Activated CD4-positive, alpha-beta T cell treated with anti-CD3 and anti-CD28 coated beads for 36 hours (primary cell): ENCODE measurements at regions of chr6 and their contacts with region 1.

Region 1: GRCh38 chr6:43174263-43175112 is 3.4 kb downstream of the SRF start:
- DNase-seq: peak; percentile 98
- ATAC-seq: peak; percentile 80
- H3K4me3 Mint-ChIP-seq: peak overlapping the region; percentile 85
- H3K27ac Mint-ChIP-seq: peak overlapping the region; percentile 79
- H3K4me1 Mint-ChIP-seq: peaks cover 38% of the 10 kb centered on the region
- H3K27me3 Mint-ChIP-seq: no peaks in the 10 kb centered on the region

Region 2: DNA sequence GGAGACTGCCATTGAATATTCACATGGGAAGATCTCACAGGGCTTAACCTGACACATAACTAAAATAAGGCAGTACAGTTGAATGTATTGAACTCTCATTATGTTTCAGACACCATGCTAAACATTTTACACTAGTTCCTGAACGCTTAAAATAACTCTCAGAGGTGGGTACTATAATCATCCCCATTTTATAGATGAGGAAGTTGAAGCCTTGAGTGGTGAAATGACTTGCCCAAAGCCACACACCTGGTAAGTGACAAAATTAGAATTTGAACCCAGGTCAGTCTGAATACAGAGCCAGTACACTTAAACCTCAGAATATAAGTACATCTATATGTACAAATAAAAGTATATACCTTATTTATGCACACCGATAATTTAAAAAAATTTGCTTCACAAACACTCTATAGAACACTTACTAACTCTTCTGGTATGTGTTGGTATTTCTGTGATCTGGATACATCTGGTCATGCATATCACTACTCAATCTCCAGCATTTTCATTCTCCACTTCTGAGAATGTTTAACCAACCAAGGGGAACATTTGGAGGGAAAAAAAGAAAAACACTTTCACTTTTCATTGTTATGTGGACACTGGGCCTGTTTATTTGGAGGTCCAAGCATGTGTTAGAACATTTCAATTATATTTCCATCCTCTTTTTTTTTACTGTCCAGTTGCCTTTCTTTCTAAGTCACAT is 397.2 kb before region 1 on chr6:
- CTCF ChIA-PET with region 1: no interaction called
- POLR2A ChIA-PET with region 1: no interaction called
- intact Hi-C with region 1: loop called (anchors 2 to 10 kb)
- DNase-seq: no peak
- ATAC-seq: no peak
- H3K4me3 Mint-ChIP-seq: no peak overlapping the region
- H3K27ac Mint-ChIP-seq: peak overlapping the region; percentile 79
- H3K4me1 Mint-ChIP-seq: peaks cover 67% of the 10 kb centered on the region
- H3K27me3 Mint-ChIP-seq: no peaks in the 10 kb centered on the region

Region 3: DNA sequence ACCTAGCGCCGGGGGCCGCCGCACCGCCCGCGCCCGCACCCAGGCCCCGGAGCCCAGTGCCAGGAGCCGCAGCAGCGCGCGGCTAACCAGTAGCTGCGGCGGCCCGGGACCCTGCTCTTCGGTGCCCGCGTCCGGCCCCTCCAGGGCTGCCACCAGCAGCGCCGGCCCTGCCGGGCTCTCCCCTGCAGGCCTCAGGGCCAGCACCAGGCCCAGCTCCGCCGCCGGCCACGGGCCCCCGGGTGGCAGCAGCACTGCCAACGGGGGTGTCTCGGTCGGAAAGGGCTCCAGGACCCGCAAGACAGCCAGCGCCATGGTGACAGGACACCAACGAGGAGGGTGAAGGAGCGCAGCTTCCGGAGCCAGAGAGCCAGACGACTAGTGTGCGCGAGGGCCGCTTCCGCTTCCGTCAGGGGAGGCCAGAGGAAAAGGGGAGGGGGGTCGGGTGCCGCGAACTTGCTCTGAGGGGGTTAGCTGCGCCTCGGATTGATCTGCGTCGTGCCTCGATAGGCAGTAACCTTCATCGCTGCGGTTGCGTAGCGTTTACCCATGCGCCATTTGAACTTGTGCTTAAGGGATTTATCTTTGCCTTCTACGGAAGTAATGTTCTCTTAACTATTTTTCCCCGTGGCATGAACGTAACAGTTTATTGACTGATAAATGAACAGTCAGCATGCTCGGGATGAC is 195.5 kb before region 1 on chr6 and contains the start of gene PEX6:
- CTCF ChIA-PET with region 1: interaction called, 3 read pairs
- POLR2A ChIA-PET with region 1: no interaction called
- intact Hi-C with region 1: loop called in 1 of 2 experiments (anchors 1 kb)
- DNase-seq: peak; percentile 98
- ATAC-seq: peak; percentile 95
- H3K4me3 Mint-ChIP-seq: peak within 1 kb of the TSS; percentile 89
- H3K27ac Mint-ChIP-seq: peak within 1 kb of the TSS; percentile 95
- H3K4me1 Mint-ChIP-seq: peaks cover 45% of the 10 kb centered on the region
- H3K27me3 Mint-ChIP-seq: no peaks in the 10 kb centered on the region
- total RNA-seq, gene PEX6: 10.7 to 14.6 TPM

Region 4: GRCh38 chr6:43059168-43060033 is 115.1 kb before region 1 on chr6 and contains the starts of genes KLC4 and MRPL2:
- CTCF ChIA-PET with region 1: no interaction called
- POLR2A ChIA-PET with region 1: interaction called, 3 read pairs
- intact Hi-C with region 1: loop called (anchors 1 kb)
- DNase-seq: peak; percentile 99
- ATAC-seq: peak; percentile 98
- H3K4me3 Mint-ChIP-seq: peak within 1 kb of the TSS; percentile 85
- H3K27ac Mint-ChIP-seq: peak within 1 kb of the TSS; percentile 94
- H3K4me1 Mint-ChIP-seq: peaks cover 27% of the 10 kb centered on the region
- H3K27me3 Mint-ChIP-seq: no peaks in the 10 kb centered on the region
- total RNA-seq, gene KLC4: 10.0 to 10.1 TPM
- total RNA-seq, gene MRPL2: 93.9 to 110 TPM

Region 5: GRCh38 chr6:43150051-43150751 is 24.3 kb before region 1 on chr6:
- CTCF ChIA-PET with region 1: no interaction called
- POLR2A ChIA-PET with region 1: no interaction called
- intact Hi-C with region 1: no loop called
- DNase-seq: no peak
- ATAC-seq: no peak
- H3K4me3 Mint-ChIP-seq: no peak overlapping the region
- H3K27ac Mint-ChIP-seq: no peak overlapping the region
- H3K4me1 Mint-ChIP-seq: no peaks in the 10 kb centered on the region
- H3K27me3 Mint-ChIP-seq: no peaks in the 10 kb centered on the region

Region 6: GRCh38 chr6:43369174-43370022 is 194.9 kb after region 1 on chr6 and contains the start of gene ZNF318:
- CTCF ChIA-PET with region 1: no interaction called
- POLR2A ChIA-PET with region 1: no interaction called
- intact Hi-C with region 1: loop called in 1 of 2 experiments (anchors 1 kb)
- DNase-seq: peak; percentile 97
- ATAC-seq: peak; percentile 97
- H3K4me3 Mint-ChIP-seq: peak within 1 kb of the TSS; percentile 86
- H3K27ac Mint-ChIP-seq: peak within 1 kb of the TSS; percentile 95
- H3K4me1 Mint-ChIP-seq: peaks cover 37% of the 10 kb centered on the region
- H3K27me3 Mint-ChIP-seq: no peaks in the 10 kb centered on the region
- total RNA-seq, gene ZNF318: 11.2 to 12.9 TPM

Region 7: DNA sequence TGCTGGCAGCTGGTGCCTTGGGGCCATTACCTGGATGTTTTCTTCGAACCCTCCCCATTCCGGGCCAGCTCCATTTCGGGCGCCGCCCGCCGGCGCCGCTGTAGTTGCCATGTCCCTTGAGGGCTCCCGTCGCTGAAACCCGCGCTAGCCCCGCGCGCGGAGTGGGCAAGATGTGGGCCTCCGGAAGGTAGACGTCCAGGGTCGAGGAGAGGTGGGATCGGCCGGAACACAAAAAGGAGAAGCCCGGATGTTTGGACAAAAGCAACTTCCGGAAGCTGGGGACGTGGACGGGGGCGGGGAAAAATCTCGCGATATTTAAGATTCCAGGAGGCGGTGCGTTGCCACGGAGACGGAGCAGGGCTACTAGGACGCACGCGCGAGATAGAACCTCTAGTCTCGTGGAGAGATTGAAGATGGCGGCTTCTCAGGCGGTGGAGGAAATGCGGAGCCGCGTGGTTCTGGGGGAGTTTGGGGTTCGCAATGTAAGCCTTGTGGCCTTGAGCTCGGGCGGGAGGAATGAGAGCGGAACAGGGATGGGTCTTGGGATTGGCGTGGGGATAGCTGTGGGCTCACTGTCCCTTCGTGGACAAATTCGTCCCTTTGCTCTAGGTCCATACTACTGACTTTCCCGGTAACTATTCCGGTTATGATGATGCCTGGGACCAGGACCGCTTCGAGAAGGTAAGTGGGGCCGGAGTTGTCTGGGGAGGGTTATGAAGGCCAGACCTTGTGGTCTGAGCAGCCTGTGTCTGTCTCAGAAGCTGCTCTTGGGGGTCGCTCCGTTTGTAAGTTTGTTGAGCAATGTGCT is 342.4 kb after region 1 on chr6 and contains the starts of genes POLR1C and YIPF3:
- CTCF ChIA-PET with region 1: no interaction called
- POLR2A ChIA-PET with region 1: interaction called, 3 read pairs
- intact Hi-C with region 1: loop called in 1 of 2 experiments (anchors 1 kb)
- DNase-seq: peak; percentile 98
- ATAC-seq: peak; percentile 93
- H3K4me3 Mint-ChIP-seq: no peak within 1 kb of the TSS
- H3K27ac Mint-ChIP-seq: no peak within 1 kb of the TSS
- H3K4me1 Mint-ChIP-seq: peaks cover 32% of the 10 kb centered on the region
- H3K27me3 Mint-ChIP-seq: no peaks in the 10 kb centered on the region
- total RNA-seq, gene POLR1C: 43.4 to 52.9 TPM
- total RNA-seq, gene YIPF3: 38.0 to 39.6 TPM